ENCODE measurements at regions of chr14 and their contacts with region 1.

Region 1: GRCh38 chr14:103418481-103418818 is 33.2 kb downstream of the MARK3 start:
- DNase-seq: no peak
- ATAC-seq: no peak
- H3K4me3 ChIP-seq: no peak overlapping the region
- H3K27ac ChIP-seq: no peak overlapping the region
- H3K4me1 ChIP-seq: no peaks in the 10 kb centered on the region; the same call in 1 of the 2 replicates
- H3K27me3 ChIP-seq: no peaks in the 10 kb centered on the region
- CTCF ChIP-seq: no peak

Region 2: DNA sequence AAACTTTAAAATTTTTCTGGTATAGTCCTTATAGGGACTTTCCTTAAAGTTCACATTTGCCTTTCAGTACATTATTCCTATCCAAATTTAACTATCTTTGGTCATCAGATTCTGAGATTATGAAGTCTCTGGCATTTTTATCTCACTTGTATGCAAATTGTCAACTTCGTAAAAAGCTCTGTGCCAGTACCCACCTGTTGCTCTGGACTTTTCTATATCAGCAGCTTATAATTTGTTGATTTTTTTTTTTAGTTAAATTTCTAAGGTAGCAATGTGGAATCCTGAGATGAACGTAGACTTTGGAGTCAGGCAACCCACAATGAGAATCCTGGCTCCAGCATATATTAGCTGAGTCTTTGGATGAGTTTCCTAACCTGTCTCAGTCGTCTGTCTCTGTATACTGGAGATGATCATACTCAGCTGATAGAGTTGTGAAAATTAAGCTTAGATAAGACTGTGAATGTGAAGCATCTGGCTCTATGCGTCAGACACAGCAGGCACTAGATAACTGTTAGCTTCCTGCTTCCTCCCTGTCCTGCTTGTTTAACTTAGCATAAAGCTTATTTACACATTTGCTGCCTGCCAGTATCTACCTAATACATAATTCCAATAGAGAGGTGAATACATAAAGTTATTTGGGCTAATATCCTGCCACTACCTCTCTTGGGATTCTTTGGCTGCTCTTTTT is 26.5 kb after region 1 on chr14:
- CTCF ChIA-PET with region 1: no interaction called
- POLR2A ChIA-PET with region 1: interaction called, 15 read pairs
- in situ Hi-C with region 1: no loop called
- intact Hi-C with region 1: no loop called
- DNase-seq: no peak
- ATAC-seq: no peak
- H3K4me3 ChIP-seq: no peak overlapping the region
- H3K27ac ChIP-seq: no peak overlapping the region
- H3K4me1 ChIP-seq: peaks cover 4% of the 10 kb centered on the region; the same call in 1 of the 2 replicates
- H3K27me3 ChIP-seq: no peaks in the 10 kb centered on the region
- CTCF ChIP-seq: no peak

Measured in Panc1 (cell line).